ENCODE measurements at regions of chr2 and their contacts with region 1.

Region 1: DNA sequence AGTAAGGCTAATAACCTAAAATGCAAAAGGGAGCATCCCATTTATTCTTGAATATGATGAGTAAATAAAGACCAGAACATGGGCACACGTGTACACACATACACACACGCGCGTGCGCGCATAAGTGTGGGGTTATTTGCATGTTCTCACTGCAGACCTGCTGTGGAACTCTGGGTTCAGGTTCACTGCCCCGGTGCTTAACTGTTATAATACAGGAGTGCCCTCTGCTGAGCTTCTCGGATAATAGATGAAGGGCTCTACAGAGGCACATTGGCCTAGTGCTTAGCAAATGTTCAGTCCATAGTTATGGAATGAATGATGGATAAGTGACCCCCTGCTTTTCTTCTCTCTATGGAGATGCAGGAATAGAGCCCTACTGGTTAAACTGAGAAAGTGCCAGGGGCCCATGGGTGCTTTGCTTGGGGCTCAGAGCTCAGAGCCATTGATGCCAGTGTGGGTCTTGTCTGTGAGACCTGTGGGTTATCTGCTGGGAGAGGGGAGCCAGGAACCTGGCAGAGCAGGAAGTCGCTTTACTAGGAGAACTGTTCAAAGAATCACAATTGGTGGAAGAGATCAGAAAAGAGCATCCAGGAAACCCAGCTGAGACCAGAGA is 3.6 kb upstream of the ARL4C start:
- DNase-seq: no peak
- H3K4me3 ChIP-seq: no peak overlapping the region
- H3K27me3 ChIP-seq: no peaks in the 10 kb centered on the region
- CTCF ChIP-seq: peak; percentile 65

Region 2: GRCh38 chr2:233976690-233977294 is 523.7 kb before region 1 on chr2:
- CTCF ChIA-PET with region 1: interaction called, 32 read pairs
- POLR2A ChIA-PET with region 1: no interaction called
- DNase-seq: no peak
- H3K4me3 ChIP-seq: no peak overlapping the region
- H3K27me3 ChIP-seq: no peaks in the 10 kb centered on the region
- CTCF ChIP-seq: peak; percentile 50

Region 3: GRCh38 chr2:234135720-234136221 is 364.7 kb before region 1 on chr2:
- CTCF ChIA-PET with region 1: interaction called, 37 read pairs
- POLR2A ChIA-PET with region 1: no interaction called
- DNase-seq: no peak
- H3K4me3 ChIP-seq: no peak overlapping the region
- H3K27me3 ChIP-seq: no peaks in the 10 kb centered on the region
- CTCF ChIP-seq: peak; percentile 83

Region 4: DNA sequence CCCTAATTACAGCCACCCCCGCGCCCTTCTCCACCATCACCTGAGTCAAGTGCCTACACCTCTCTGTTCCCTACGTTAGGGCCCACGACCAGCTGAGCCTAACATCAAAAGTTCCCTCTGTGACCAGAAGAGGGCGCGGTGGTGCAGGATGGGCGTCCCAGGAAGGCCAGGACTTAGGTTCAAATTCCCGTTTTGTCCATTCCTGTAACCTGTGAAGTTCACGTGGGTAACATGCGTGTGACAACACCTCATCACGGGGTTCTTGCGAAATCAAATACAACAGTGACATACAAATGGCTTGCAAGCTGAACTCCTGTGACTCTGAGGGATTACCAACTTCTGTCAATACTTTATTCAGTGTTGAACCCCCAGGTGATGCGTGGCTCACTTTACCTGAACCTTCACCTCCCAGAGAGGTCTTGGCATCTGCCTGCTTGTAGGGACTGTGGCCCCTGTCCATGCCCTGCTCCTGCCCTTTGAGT is 211.5 kb before region 1 on chr2:
- CTCF ChIA-PET with region 1: interaction called, 30 read pairs
- POLR2A ChIA-PET with region 1: no interaction called
- DNase-seq: no peak
- H3K4me3 ChIP-seq: no peak overlapping the region
- H3K27me3 ChIP-seq: no peaks in the 10 kb centered on the region
- CTCF ChIP-seq: peak; percentile 76

Region 5: GRCh38 chr2:234488913-234489451 is 11.5 kb before region 1 on chr2:
- CTCF ChIA-PET with region 1: no interaction called
- POLR2A ChIA-PET with region 1: no interaction called
- DNase-seq: no peak
- H3K4me3 ChIP-seq: no peak overlapping the region
- H3K27me3 ChIP-seq: no peaks in the 10 kb centered on the region; the same call in 1 of the 2 replicates
- CTCF ChIP-seq: no peak

Measured in BJ (cell line).